GM12878 (cell line): ENCODE measurements at regions of chr10 and their contacts with region 1.

Region 1: DNA sequence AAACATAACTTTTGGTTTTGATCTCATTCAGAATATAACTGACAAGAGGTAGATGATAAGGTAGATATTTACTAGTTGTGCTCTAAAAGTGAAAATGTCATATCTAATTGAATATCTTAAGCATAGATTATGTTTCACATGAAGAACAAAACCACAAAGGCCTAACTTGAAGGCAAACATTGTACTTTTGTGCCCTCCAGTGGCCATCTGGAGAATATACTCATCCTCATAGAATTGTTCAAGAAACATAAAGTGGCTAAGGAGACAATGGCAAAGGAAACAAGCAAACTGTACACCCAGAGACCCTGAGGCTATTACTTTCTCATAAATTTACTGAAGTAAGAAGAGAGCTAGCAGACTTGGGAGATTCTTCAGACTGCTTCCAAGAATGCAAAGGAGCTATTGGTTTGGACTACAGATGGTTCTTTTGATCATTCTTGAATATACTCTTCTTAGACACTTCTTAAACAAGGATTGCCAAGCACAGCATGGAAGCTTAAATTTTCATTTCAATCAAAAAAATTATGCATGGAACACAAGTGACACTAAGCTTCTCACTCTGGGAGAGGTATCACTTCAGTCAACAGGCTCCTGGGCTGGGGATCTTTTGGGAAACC is 98.2 kb upstream of the DKK1 start:
- DNase-seq: peak; percentile 32
- ATAC-seq: peak; percentile 91
- H3K4me3 ChIP-seq: no peak overlapping the region
- H3K27ac ChIP-seq: no peak overlapping the region
- H3K4me1 ChIP-seq: peaks cover 8% of the 10 kb centered on the region
- H3K27me3 ChIP-seq: no peaks in the 10 kb centered on the region
- CTCF ChIP-seq: peak; percentile 67 to 76 (median 70)
- EP300 ChIP-seq: no peak
- POLR2A ChIP-seq: no peak
- RAD21 ChIP-seq: peak; percentile 93

Region 2: DNA sequence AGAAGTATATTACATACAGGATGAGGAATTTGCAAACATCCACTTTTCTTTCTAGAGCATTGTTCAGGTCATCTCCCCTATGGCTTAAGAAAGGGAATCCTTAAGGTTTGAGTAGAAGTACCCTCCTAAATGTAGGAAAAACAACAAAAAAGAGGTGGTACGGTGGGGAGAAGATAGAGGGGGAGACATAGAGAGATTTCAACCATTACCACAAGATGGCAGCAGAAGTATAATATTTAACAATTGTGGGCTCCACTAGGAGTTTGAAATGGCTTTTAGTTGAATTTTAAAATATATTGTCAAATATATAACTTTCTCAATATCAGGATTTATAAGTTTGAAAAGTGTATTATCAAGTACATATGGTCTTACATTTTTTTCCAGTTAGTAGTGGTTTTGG is 1214.3 kb before region 1 on chr10:
- CTCF ChIA-PET with region 1: interaction called, 7 read pairs
- POLR2A ChIA-PET with region 1: no interaction called
- RAD21 ChIA-PET with region 1: no interaction called
- SMC1A ChIA-PET with region 1: no interaction called
- in situ Hi-C with region 1: loop called (anchors 25 kb)
- intact Hi-C with region 1: loop called (anchors 1 kb)
- DNase-seq: no peak
- ATAC-seq: peak; percentile 69
- H3K4me3 ChIP-seq: no peak overlapping the region
- H3K27ac ChIP-seq: no peak overlapping the region
- H3K4me1 ChIP-seq: no peaks in the 10 kb centered on the region
- H3K27me3 ChIP-seq: no peaks in the 10 kb centered on the region; a peak in 1 of 4 replicates
- CTCF ChIP-seq: peak; percentile 36 to 50 (median 41); a peak in 5 of 6 replicates
- EP300 ChIP-seq: no peak
- POLR2A ChIP-seq: no peak
- RAD21 ChIP-seq: peak; percentile 42

Region 3: GRCh38 chr10:51010977-51011376 is 1204.9 kb before region 1 on chr10:
- CTCF ChIA-PET with region 1: interaction called, 7 read pairs
- POLR2A ChIA-PET with region 1: no interaction called
- RAD21 ChIA-PET with region 1: no interaction called
- SMC1A ChIA-PET with region 1: no interaction called
- in situ Hi-C with region 1: loop called (anchors 25 kb)
- intact Hi-C with region 1: no loop called
- DNase-seq: peak; percentile 8
- ATAC-seq: peak; percentile 66
- H3K4me3 ChIP-seq: no peak overlapping the region
- H3K27ac ChIP-seq: no peak overlapping the region
- H3K4me1 ChIP-seq: no peaks in the 10 kb centered on the region
- H3K27me3 ChIP-seq: no peaks in the 10 kb centered on the region; a peak in 1 of 4 replicates
- CTCF ChIP-seq: peak; percentile 52 to 72 (median 68)
- EP300 ChIP-seq: no peak
- POLR2A ChIP-seq: no peak
- RAD21 ChIP-seq: peak; percentile 61

Region 4: DNA sequence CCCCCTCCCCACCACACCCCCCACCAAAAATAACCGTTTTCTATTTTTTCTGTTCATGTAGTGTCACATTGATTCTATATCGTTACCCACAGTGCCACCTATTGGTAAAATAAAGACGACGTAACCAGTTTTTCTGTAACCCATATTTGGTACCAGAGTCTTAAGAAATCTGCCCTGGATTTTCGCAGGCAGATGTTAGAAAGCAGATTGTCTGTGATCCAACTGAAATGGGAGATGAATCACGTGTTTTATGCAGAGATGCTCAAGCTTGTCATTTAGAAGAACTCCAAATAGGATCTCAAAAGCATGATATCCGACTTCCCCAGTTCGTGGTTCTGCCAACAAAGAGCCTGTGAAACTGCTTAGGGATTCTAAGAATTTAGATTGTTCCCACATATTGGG is 255.4 kb before region 1 on chr10:
- CTCF ChIA-PET with region 1: interaction called, 10 read pairs
- POLR2A ChIA-PET with region 1: no interaction called
- RAD21 ChIA-PET with region 1: no interaction called
- SMC1A ChIA-PET with region 1: no interaction called
- in situ Hi-C with region 1: no loop called
- intact Hi-C with region 1: loop called (anchors 5 kb)
- DNase-seq: no peak
- ATAC-seq: peak; percentile 71
- H3K4me3 ChIP-seq: no peak overlapping the region
- H3K27ac ChIP-seq: no peak overlapping the region
- H3K4me1 ChIP-seq: no peaks in the 10 kb centered on the region
- H3K27me3 ChIP-seq: no peaks in the 10 kb centered on the region
- CTCF ChIP-seq: peak; percentile 38 to 50 (median 49); a peak in 5 of 6 replicates
- EP300 ChIP-seq: no peak
- POLR2A ChIP-seq: no peak
- RAD21 ChIP-seq: peak; percentile 79

Region 5: DNA sequence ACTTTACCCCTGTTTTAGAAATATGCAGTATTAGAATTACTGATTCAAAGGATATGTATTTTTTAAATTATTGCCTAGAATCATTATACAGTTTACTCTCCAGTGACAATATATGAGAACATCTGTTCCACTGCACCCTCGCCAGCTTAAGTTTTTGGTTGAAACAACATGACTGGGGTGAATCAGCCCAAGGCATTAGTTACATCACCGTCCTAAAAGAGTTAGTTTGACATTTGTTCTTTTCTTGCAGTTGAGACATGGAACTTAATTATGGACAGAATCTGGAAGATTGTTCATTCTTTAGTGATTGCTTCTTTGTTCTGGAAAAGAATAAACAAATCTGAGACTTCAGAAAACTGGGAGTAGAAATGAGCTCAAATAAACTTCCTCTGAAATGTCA is 69.1 kb before region 1 on chr10:
- CTCF ChIA-PET with region 1: no interaction called
- POLR2A ChIA-PET with region 1: no interaction called
- RAD21 ChIA-PET with region 1: no interaction called
- SMC1A ChIA-PET with region 1: no interaction called
- in situ Hi-C with region 1: no loop called
- intact Hi-C with region 1: no loop called
- DNase-seq: no peak
- ATAC-seq: no peak
- H3K4me3 ChIP-seq: no peak overlapping the region
- H3K27ac ChIP-seq: no peak overlapping the region
- H3K4me1 ChIP-seq: no peaks in the 10 kb centered on the region
- H3K27me3 ChIP-seq: no peaks in the 10 kb centered on the region
- CTCF ChIP-seq: no peak
- EP300 ChIP-seq: no peak
- POLR2A ChIP-seq: no peak
- RAD21 ChIP-seq: no peak

Region 6: DNA sequence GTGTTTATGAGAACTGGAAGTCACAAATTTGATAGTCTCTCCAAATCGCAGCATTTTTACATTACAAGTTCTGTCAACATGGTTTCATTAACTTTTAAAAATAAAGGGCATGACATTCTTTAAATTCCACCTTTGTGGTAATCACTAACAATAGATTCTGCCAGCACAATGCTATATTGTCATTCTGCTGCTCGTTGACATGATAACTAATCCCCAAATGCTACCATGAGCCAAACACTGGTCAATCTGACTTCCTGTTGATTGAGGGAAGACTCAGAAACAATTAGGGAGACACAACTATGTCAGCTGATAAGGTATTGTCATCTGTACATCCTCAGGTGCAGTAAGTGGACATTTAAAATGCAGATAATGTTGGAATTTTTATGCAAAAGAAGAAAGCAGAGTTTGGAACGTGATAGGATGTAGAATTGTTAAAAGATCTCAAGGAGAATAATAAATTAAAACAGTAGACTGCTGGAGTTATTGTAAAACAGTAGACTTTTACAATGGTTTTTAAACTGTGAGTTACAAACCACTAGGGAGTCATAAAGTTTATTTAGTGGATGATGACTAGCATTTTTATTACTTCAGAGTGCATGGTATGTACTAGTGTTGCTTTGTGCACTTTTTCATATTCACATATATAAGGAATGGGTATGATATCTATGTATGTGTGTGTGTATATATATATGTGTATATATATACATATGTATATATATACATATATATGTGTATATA is 28.2 kb before region 1 on chr10:
- CTCF ChIA-PET with region 1: no interaction called
- POLR2A ChIA-PET with region 1: no interaction called
- RAD21 ChIA-PET with region 1: no interaction called
- SMC1A ChIA-PET with region 1: no interaction called
- in situ Hi-C with region 1: no loop called
- intact Hi-C with region 1: no loop called
- DNase-seq: no peak
- ATAC-seq: no peak
- H3K4me3 ChIP-seq: no peak overlapping the region
- H3K27ac ChIP-seq: no peak overlapping the region
- H3K4me1 ChIP-seq: no peaks in the 10 kb centered on the region
- H3K27me3 ChIP-seq: no peaks in the 10 kb centered on the region
- CTCF ChIP-seq: no peak
- EP300 ChIP-seq: no peak
- POLR2A ChIP-seq: no peak
- RAD21 ChIP-seq: no peak

Region 7: DNA sequence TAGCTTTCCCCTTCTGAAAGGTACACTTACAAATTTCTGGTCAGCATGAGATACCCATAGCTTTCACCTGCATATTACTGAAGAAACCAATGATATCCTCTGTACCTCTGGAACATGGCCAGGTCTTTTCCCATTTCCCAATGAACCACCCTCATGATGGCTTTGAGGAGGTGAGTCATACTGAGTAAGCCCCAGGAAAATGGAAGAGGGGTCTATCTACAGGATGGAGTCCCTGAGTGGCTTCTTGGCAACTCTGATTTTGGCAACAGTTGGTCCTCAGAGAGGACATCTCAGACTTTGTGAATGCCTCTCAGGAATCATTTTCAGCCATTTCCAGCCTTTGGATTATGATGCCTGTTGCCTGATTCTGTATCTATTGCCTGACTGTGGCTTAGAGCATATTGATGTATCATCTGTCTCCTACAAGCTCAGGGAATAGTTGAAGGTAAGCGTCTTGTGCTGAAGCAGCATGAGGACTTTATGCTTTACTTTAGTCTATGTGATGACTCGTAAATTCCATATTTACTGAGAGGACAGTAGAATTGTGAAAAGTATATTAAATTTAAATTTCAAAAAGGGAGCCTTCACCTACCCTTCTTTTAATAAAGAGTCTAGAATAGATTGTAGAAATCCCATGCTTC is 13.6 kb after region 1 on chr10:
- CTCF ChIA-PET with region 1: interaction called, 11 read pairs
- POLR2A ChIA-PET with region 1: no interaction called
- RAD21 ChIA-PET with region 1: interaction called, 3 read pairs
- SMC1A ChIA-PET with region 1: interaction called, 4 read pairs
- in situ Hi-C with region 1: no loop called
- intact Hi-C with region 1: no loop called
- DNase-seq: no peak
- ATAC-seq: no peak
- H3K4me3 ChIP-seq: no peak overlapping the region
- H3K27ac ChIP-seq: no peak overlapping the region
- H3K4me1 ChIP-seq: no peaks in the 10 kb centered on the region
- H3K27me3 ChIP-seq: no peaks in the 10 kb centered on the region
- CTCF ChIP-seq: no peak
- EP300 ChIP-seq: no peak
- POLR2A ChIP-seq: no peak
- RAD21 ChIP-seq: no peak

Region 8: GRCh38 chr10:52283174-52283573 is 67.3 kb after region 1 on chr10:
- CTCF ChIA-PET with region 1: no interaction called
- POLR2A ChIA-PET with region 1: no interaction called
- RAD21 ChIA-PET with region 1: no interaction called
- SMC1A ChIA-PET with region 1: no interaction called
- in situ Hi-C with region 1: no loop called
- intact Hi-C with region 1: no loop called
- DNase-seq: no peak
- ATAC-seq: no peak
- H3K4me3 ChIP-seq: no peak overlapping the region
- H3K27ac ChIP-seq: no peak overlapping the region
- H3K4me1 ChIP-seq: no peaks in the 10 kb centered on the region
- H3K27me3 ChIP-seq: no peaks in the 10 kb centered on the region
- CTCF ChIP-seq: no peak
- EP300 ChIP-seq: no peak
- POLR2A ChIP-seq: no peak
- RAD21 ChIP-seq: no peak

Region 9: DNA sequence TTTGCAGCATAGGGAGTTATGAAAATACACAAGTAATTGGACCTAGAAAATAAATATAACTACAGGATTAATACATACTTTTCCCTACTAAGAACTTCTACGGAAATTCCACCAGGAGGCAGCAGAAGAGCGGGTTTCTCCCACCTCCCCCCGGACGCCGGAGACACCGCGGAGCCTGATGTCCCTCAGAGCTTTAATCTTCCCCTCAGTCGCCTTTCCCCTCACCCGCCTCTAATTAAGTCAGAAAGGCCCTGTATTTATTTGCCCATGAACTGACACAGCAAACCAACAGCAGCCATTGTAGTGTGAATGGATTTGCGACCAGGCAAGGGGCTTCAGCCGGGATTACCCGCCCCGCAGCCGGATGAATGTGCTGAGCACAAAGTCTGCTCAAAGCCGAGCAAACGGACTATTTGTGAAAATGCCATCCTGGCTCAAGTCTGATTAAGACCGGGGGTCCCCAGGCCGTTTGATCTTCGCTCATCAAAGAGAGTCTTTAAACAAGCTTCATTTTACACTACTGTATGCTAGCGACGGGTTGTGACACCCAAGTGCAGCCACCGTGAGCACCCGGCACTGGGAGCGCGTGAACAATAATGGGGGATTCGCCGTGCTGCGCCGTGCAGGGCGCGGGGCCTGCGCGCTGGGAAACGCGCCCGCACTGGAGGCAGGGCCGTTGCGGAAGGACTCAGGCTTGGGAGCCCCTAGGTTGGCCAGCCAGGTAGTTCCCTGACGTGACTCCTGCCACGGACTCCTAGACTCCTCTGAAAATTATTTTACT is 92.6 kb after region 1 on chr10:
- CTCF ChIA-PET with region 1: no interaction called
- POLR2A ChIA-PET with region 1: no interaction called
- RAD21 ChIA-PET with region 1: no interaction called
- SMC1A ChIA-PET with region 1: no interaction called
- in situ Hi-C with region 1: no loop called
- intact Hi-C with region 1: no loop called
- DNase-seq: no peak
- ATAC-seq: peak; percentile 76
- H3K4me3 ChIP-seq: no peak overlapping the region
- H3K27ac ChIP-seq: no peak overlapping the region
- H3K4me1 ChIP-seq: no peaks in the 10 kb centered on the region
- H3K27me3 ChIP-seq: peaks cover 0 to 5% of the 10 kb centered on the region in 2 experiments; a peak in 3 of 4 replicates
- CTCF ChIP-seq: peak; percentile 36 to 52 (median 49); a peak in 5 of 6 replicates
- EP300 ChIP-seq: no peak
- POLR2A ChIP-seq: no peak
- RAD21 ChIP-seq: peak; percentile 70